ENCODE measurements at regions of chr10 and their contacts with region 1.

Region 1: GRCh38 chr10:61896854-61897661 is 4.4 kb upstream of the ARID5B start:
- DNase-seq: peak in 34 of 35 experiments; percentile 2 to 87 (median 38)
- ATAC-seq: peak; percentile 54 to 67 (median 64)
- H3K4me3 ChIP-seq: peak overlapping the region; percentile 29 to 42
- H3K4me3 Mint-ChIP-seq: peak overlapping the region; percentile 76 to 83 (median 81)
- H3K27ac ChIP-seq: no peak overlapping the region
- H3K27ac Mint-ChIP-seq: peak overlapping the region; percentile 87
- H3K4me1 ChIP-seq: peaks cover 10 to 16% of the 10 kb centered on the region in 2 experiments
- H3K4me1 Mint-ChIP-seq: peaks cover 33 to 42% (median 34%) of the 10 kb centered on the region in 3 donors
- H3K27me3 ChIP-seq: no peaks in the 10 kb centered on the region
- H3K27me3 Mint-ChIP-seq: no peaks in the 10 kb centered on the region

Region 2: GRCh38 chr10:61153771-61154170 is 743.3 kb before region 1 on chr10:
- CTCF ChIA-PET with region 1: no interaction called
- POLR2A ChIA-PET with region 1: no interaction called
- DNase-seq: no peak
- ATAC-seq: no peak
- H3K4me3 ChIP-seq: no peak overlapping the region
- H3K4me3 Mint-ChIP-seq: no peak overlapping the region
- H3K27ac ChIP-seq: no peak overlapping the region
- H3K27ac Mint-ChIP-seq: no peak overlapping the region
- H3K4me1 ChIP-seq: no peaks in the 10 kb centered on the region
- H3K4me1 Mint-ChIP-seq: no peaks in the 10 kb centered on the region
- H3K27me3 ChIP-seq: no peaks in the 10 kb centered on the region
- H3K27me3 Mint-ChIP-seq: peaks cover 0 to 13% of the 10 kb centered on the region in 2 donors

Region 3: GRCh38 chr10:61701055-61701705 is 195.9 kb before region 1 on chr10:
- CTCF ChIA-PET with region 1: no interaction called
- POLR2A ChIA-PET with region 1: no interaction called
- DNase-seq: no peak
- ATAC-seq: no peak
- H3K4me3 ChIP-seq: no peak overlapping the region
- H3K4me3 Mint-ChIP-seq: no peak overlapping the region
- H3K27ac ChIP-seq: no peak overlapping the region
- H3K27ac Mint-ChIP-seq: no peak overlapping the region
- H3K4me1 ChIP-seq: no peaks in the 10 kb centered on the region
- H3K4me1 Mint-ChIP-seq: no peaks in the 10 kb centered on the region
- H3K27me3 ChIP-seq: peaks cover 0 to 3% of the 10 kb centered on the region in 2 experiments
- H3K27me3 Mint-ChIP-seq: peaks cover 0 to 3% of the 10 kb centered on the region in 2 donors

Region 4: DNA sequence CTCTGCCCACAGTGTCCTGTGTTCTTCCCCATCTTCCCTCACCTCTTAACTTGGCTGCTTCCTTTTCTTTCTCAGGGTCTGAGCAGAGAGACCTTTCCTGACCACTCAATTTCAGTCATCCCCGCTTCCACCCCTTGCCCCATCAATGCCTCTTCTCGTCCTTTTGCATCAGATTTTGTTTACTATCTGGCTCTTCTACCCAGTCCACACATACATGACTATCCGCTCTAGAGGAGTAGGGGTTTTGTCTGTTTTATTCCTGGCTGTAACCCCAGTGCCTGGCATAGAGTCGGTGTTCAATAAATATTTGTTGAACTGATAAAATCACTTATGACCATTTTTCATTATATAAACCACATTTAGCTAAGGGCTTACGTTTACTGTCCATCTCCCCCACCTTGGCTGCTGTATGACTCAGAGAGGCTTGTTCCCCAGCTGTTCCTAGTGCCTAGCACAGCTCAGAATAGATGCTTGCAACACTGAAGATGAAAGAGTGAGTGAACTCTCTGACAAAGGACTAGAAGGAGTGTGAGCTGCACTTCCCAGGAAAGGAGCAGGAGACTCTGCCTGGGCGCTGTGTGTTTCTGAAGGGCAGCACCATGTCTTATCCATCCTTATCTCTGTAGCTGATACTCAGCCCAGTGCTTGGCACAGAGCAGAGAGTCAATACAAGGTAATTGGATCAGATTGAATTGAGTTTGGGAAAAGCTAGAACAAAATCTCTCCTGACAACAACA is 26.3 kb after region 1 on chr10:
- CTCF ChIA-PET with region 1: interaction called, 3 to 14 read pairs
- POLR2A ChIA-PET with region 1: no interaction called
- DNase-seq: no peak
- ATAC-seq: no peak
- H3K4me3 ChIP-seq: no peak overlapping the region
- H3K4me3 Mint-ChIP-seq: no peak overlapping the region
- H3K27ac ChIP-seq: no peak overlapping the region
- H3K27ac Mint-ChIP-seq: peak overlapping the region; percentile 40 to 56
- H3K4me1 ChIP-seq: peaks cover 0 to 9% of the 10 kb centered on the region in 2 experiments
- H3K4me1 Mint-ChIP-seq: peaks cover 32 to 58% (median 55%) of the 10 kb centered on the region in 3 donors
- H3K27me3 ChIP-seq: no peaks in the 10 kb centered on the region
- H3K27me3 Mint-ChIP-seq: no peaks in the 10 kb centered on the region

Region 5: GRCh38 chr10:61943674-61944410 is 46.8 kb after region 1 on chr10:
- CTCF ChIA-PET with region 1: interaction called, 5 to 39 read pairs
- POLR2A ChIA-PET with region 1: interaction called, 3 to 4 read pairs
- DNase-seq: peak in 12 of 35 experiments; percentile 3 to 62 (median 13)
- ATAC-seq: peak; percentile 23 to 80 (median 48)
- H3K4me3 ChIP-seq: no peak overlapping the region
- H3K4me3 Mint-ChIP-seq: peak overlapping the region; percentile 65 to 77 (median 76)
- H3K27ac ChIP-seq: peak overlapping the region; percentile 87
- H3K27ac Mint-ChIP-seq: peak overlapping the region; percentile 96 to 97
- H3K4me1 ChIP-seq: peaks cover 8 to 18% of the 10 kb centered on the region in 2 experiments
- H3K4me1 Mint-ChIP-seq: peaks cover 46 to 59% (median 58%) of the 10 kb centered on the region in 3 donors
- H3K27me3 ChIP-seq: no peaks in the 10 kb centered on the region
- H3K27me3 Mint-ChIP-seq: no peaks in the 10 kb centered on the region

Region 6: GRCh38 chr10:62162266-62162981 is 265.4 kb after region 1 on chr10:
- CTCF ChIA-PET with region 1: no interaction called
- POLR2A ChIA-PET with region 1: interaction called in 1 of 2 experiments, 12 read pairs
- DNase-seq: no peak
- ATAC-seq: no peak
- H3K4me3 ChIP-seq: no peak overlapping the region
- H3K4me3 Mint-ChIP-seq: no peak overlapping the region
- H3K27ac ChIP-seq: no peak overlapping the region
- H3K27ac Mint-ChIP-seq: no peak overlapping the region
- H3K4me1 ChIP-seq: no peaks in the 10 kb centered on the region
- H3K4me1 Mint-ChIP-seq: peaks cover 12 to 32% (median 21%) of the 10 kb centered on the region in 3 donors
- H3K27me3 ChIP-seq: no peaks in the 10 kb centered on the region
- H3K27me3 Mint-ChIP-seq: no peaks in the 10 kb centered on the region

Region 7: GRCh38 chr10:62244780-62245467 is 347.9 kb after region 1 on chr10:
- CTCF ChIA-PET with region 1: interaction called, 5 to 36 read pairs
- POLR2A ChIA-PET with region 1: no interaction called
- DNase-seq: peak in 31 of 35 experiments; percentile 2 to 82 (median 37)
- ATAC-seq: peak; percentile 76 to 89 (median 81)
- H3K4me3 ChIP-seq: no peak overlapping the region
- H3K4me3 Mint-ChIP-seq: no peak overlapping the region
- H3K27ac ChIP-seq: no peak overlapping the region
- H3K27ac Mint-ChIP-seq: no peak overlapping the region
- H3K4me1 ChIP-seq: peaks cover 3 to 20% of the 10 kb centered on the region in 2 experiments
- H3K4me1 Mint-ChIP-seq: peaks cover 27 to 33% (median 32%) of the 10 kb centered on the region in 3 donors
- H3K27me3 ChIP-seq: no peaks in the 10 kb centered on the region
- H3K27me3 Mint-ChIP-seq: no peaks in the 10 kb centered on the region

Measured in T-cell (primary cell).